ENCODE measurements at regions of chr1 and their contacts with region 1.

Region 1: GRCh38 chr1:230073371-230074035 is 6.5 kb downstream of the GALNT2 start:
- DNase-seq: peak in 1 of 5 donors; percentile 69
- ATAC-seq: peak in 1 of 4 donors; percentile 28
- H3K4me3 ChIP-seq: no peak overlapping the region
- H3K27ac ChIP-seq: no peak overlapping the region
- H3K4me1 ChIP-seq: peaks cover 1 to 64% (median 36%) of the 10 kb centered on the region in 12 donors
- H3K27me3 ChIP-seq: no peaks in the 10 kb centered on the region
- CTCF ChIP-seq: no peak
- POLR2A ChIP-seq: no peak

Region 2: GRCh38 chr1:229862017-229862774 is 211.3 kb before region 1 on chr1:
- intact Hi-C with region 1: loop called in 1 of 10 experiments (anchors 10 kb)
- DNase-seq: no peak
- ATAC-seq: no peak
- H3K4me3 ChIP-seq: no peak overlapping the region
- H3K27ac ChIP-seq: peak overlapping the region in 10 of 12 donors; percentile 20 to 90 (median 36)
- H3K4me1 ChIP-seq: peaks cover 0 to 46% (median 18%) of the 10 kb centered on the region in 12 donors
- H3K27me3 ChIP-seq: no peaks in the 10 kb centered on the region
- CTCF ChIP-seq: no peak
- POLR2A ChIP-seq: no peak

Region 3: DNA sequence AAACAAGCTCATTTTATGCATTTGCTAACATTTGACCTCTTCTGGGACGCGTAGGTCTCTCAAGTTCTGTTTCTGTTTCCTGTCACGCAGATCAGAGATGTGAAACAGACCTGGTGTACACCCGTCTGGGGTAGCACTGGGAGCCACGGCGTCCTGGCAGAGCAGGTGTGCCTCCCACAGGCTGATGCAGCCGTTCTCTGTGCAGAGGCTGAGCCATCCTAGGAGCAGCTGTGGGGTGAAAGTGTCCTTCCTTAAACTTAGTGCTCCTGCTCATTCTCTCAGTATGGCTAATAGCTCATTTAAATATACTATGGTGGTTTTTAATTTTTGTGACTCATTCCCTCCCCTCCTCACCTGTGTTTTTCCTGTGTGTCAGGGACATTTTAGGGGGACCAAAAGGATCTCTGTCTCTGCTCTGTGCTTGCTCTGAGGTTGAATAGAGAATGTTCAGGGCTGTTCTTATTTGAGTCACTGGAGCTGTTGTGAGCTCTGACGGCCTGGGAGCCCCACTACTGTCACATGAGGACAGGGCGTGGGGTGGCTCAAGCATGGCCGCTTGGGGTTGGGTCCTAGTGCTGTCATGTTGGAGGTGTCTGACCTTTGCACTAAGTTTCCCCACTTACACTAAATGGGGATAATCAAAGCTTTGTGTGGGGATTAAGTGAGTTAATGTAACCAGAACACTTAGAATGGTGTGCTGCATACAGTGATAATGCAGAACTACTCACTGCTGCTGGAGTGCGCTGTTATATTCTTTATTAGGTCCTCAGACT is 36.6 kb after region 1 on chr1:
- intact Hi-C with region 1: loop called in 1 of 10 experiments (anchors 5 kb)
- DNase-seq: no peak
- ATAC-seq: no peak
- H3K4me3 ChIP-seq: no peak overlapping the region
- H3K27ac ChIP-seq: no peak overlapping the region
- H3K4me1 ChIP-seq: peaks cover 4 to 57% (median 31%) of the 10 kb centered on the region in 12 donors
- H3K27me3 ChIP-seq: no peaks in the 10 kb centered on the region
- CTCF ChIP-seq: no peak
- POLR2A ChIP-seq: no peak

Region 4: DNA sequence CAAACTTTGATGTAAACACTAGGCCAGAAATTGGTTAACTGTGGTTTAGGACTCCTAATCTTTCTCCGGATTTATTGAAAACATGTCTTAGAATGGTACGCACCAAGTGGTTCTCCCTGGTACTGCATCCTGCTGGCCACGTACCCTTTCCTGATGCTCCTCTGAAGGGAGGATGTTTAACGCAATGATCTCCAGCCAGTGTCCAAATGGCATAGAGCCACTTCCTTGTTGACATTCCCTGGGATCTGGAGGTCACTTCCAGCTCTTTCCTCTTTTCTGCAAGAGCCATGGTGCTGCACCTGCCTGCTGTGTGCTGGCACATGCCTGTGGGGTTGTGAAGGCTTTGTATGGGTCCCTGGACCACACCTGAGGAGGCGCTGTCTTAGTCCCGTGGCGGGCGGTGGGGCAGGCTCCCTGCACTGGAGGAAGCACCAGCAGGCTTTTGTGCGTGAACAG is 47.5 kb after region 1 on chr1:
- intact Hi-C with region 1: loop called in 1 of 10 experiments (anchors 5 kb)
- DNase-seq: no peak
- ATAC-seq: no peak
- H3K4me3 ChIP-seq: no peak overlapping the region
- H3K27ac ChIP-seq: peak overlapping the region in 1 of 12 donors; percentile 60
- H3K4me1 ChIP-seq: peaks cover 0 to 50% (median 22%) of the 10 kb centered on the region in 12 donors
- H3K27me3 ChIP-seq: no peaks in the 10 kb centered on the region
- CTCF ChIP-seq: peak in 11 of 12 donors; percentile 25 to 62 (median 47)
- POLR2A ChIP-seq: no peak